ENCODE measurements at regions of chr1 and their contacts with region 1.

Region 1: DNA sequence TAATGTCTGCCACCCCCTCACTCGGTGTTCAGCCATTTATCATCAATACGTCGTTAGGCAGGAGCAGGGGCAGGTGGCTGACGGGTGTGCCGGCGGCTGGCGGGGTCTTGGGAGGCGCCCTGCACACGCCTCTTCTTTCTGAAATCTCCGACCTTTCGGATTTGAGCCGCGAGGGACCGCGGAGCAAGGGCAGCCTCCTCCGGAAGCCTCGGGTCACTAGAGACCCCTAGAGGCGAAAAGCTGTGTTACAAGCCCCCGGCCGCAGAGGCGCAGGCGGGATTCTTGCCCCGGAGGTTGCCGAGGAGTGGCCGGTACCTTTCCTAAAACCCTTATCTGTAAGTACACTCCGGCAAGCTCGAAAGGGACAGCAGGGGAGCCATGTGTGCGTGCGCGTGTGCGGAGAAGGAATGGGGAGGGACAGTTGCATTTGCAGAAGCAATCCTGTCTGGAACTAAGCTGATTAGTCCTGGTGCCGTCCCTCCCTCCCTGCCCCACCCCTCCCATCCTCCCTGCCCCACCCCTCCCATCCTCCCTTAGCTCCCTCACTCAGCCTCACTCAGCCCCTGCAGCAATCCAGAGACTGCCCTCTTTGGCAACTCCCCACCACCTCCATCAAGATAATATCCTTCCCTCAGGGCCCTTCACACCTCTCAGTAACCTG is 11.0 kb downstream of the BRINP2 start:
- DNase-seq: peak; percentile 21
- ATAC-seq: peak; percentile 98
- H3K4me3 ChIP-seq: peak overlapping the region in 1 of 3 experiments; percentile 30; a peak in 1 of 6 replicates
- H3K27ac ChIP-seq: no peak overlapping the region
- H3K4me1 ChIP-seq: 0 out of 2 replicates have a peak, but pooled peaks cover 8% of the 10 kb centered on the region
- H3K27me3 ChIP-seq: peaks cover 3 to 14% of the 10 kb centered on the region in 2 experiments; a peak in 3 of 5 replicates
- CTCF ChIP-seq: peak; percentile 84
- EP300 ChIP-seq: no peak
- POLR2A ChIP-seq: no peak
- RAD21 ChIP-seq: no peak

Region 2: GRCh38 chr1:176897350-176898236 is 284.2 kb before region 1 on chr1:
- CTCF ChIA-PET with region 1: interaction called, 5 read pairs
- POLR2A ChIA-PET with region 1: no interaction called
- in situ Hi-C with region 1: no loop called
- intact Hi-C with region 1: loop called (anchors 1 kb)
- DNase-seq: peak; percentile 56
- ATAC-seq: peak; percentile 94
- H3K4me3 ChIP-seq: no peak overlapping the region
- H3K27ac ChIP-seq: no peak overlapping the region
- H3K4me1 ChIP-seq: peaks cover 6% of the 10 kb centered on the region; the same call in 1 of the 2 replicates
- H3K27me3 ChIP-seq: peaks cover 0 to 4% of the 10 kb centered on the region in 2 experiments; a peak in 2 of 5 replicates
- CTCF ChIP-seq: peak; percentile 83
- EP300 ChIP-seq: no peak
- POLR2A ChIP-seq: no peak
- RAD21 ChIP-seq: no peak; the same call in 1 of the 2 replicates

Region 3: GRCh38 chr1:176949033-176949662 is 232.6 kb before region 1 on chr1:
- CTCF ChIA-PET with region 1: interaction called, 4 read pairs
- POLR2A ChIA-PET with region 1: no interaction called
- in situ Hi-C with region 1: no loop called
- intact Hi-C with region 1: loop called (anchors 1 kb)
- DNase-seq: peak; percentile 71
- ATAC-seq: peak; percentile 100
- H3K4me3 ChIP-seq: no peak overlapping the region
- H3K27ac ChIP-seq: no peak overlapping the region
- H3K4me1 ChIP-seq: no peaks in the 10 kb centered on the region
- H3K27me3 ChIP-seq: no peaks in the 10 kb centered on the region; a peak in 1 of 5 replicates
- CTCF ChIP-seq: peak; percentile 84
- EP300 ChIP-seq: no peak
- POLR2A ChIP-seq: no peak
- RAD21 ChIP-seq: peak; percentile 77

Region 4: GRCh38 chr1:177069490-177069889 is 112.3 kb before region 1 on chr1:
- CTCF ChIA-PET with region 1: no interaction called
- POLR2A ChIA-PET with region 1: no interaction called
- in situ Hi-C with region 1: no loop called
- intact Hi-C with region 1: no loop called
- DNase-seq: no peak
- ATAC-seq: no peak
- H3K4me3 ChIP-seq: no peak overlapping the region
- H3K27ac ChIP-seq: no peak overlapping the region
- H3K4me1 ChIP-seq: no peaks in the 10 kb centered on the region
- H3K27me3 ChIP-seq: 0 out of 5 replicates have a peak, but pooled peaks cover 0 to 4% of the 10 kb centered on the region in 2 experiments
- CTCF ChIP-seq: no peak
- EP300 ChIP-seq: no peak
- POLR2A ChIP-seq: no peak
- RAD21 ChIP-seq: no peak

Measured in HepG2 (cell line).